MCF 10A (cell line): ENCODE measurements at regions of chr1 and their contacts with region 1.

Region 1: DNA sequence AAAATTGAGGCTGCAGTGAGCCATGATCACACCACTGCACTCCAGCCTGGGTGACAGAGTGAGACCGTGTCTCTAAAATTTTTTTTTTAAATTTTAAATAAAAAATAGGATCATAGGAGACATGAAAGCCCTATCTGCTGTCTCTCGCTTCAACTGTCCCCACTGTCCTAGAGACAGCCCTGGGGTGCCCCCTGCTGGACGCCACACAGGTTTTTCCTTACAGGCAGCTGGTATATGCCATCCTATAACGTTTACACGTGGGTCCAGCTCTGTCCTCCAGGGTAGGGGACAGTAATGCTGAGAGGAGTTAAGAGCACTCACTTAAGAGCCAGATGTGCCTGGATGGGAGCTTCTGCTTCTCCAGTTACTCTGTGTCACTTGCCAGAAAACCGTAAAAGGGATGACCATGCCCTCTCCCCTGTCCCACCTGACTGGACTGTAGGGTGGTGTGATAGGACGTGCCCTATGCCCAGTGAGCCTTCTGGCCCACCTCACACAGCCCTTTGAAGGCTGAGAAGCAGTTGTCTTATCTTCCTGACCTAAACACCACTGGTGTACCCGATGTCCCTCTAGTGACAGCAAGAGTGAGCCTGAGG is 8.5 kb downstream of the FBXO2 start:
- DNase-seq: peak; percentile 84
- H3K4me3 Mint-ChIP-seq: no peak overlapping the region
- H3K27ac Mint-ChIP-seq: no peak overlapping the region
- H3K4me1 Mint-ChIP-seq: no peaks in the 10 kb centered on the region
- H3K27me3 Mint-ChIP-seq: no peaks in the 10 kb centered on the region
- CTCF ChIP-seq: peak; percentile 88

Region 2: DNA sequence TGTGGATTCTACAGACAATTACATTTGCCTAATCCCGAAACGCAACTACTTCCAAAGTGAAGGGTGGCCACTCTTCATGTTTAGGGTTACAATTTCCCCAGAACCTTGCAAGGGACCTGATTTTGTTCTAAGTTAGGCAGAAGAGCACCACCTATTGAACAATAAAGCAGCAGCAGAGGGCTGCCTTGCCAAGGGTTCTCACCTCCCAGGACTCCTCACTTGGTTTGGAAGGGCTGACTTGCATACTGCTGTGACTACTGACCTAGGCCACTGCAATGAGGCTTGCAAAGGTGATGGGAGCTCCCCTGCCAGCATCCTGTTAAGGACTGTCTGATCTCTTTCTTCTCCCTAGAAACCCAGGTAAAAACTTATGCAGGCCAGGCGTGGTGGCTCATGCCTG is 397.6 kb before region 1 on chr1:
- CTCF ChIA-PET with region 1: interaction called, 123 read pairs
- POLR2A ChIA-PET with region 1: no interaction called
- intact Hi-C with region 1: no loop called
- DNase-seq: no peak
- H3K4me3 Mint-ChIP-seq: no peak overlapping the region
- H3K27ac Mint-ChIP-seq: no peak overlapping the region
- H3K4me1 Mint-ChIP-seq: no peaks in the 10 kb centered on the region
- H3K27me3 Mint-ChIP-seq: no peaks in the 10 kb centered on the region
- CTCF ChIP-seq: no peak

Region 3: GRCh38 chr1:11285883-11286734 is 359.7 kb before region 1 on chr1:
- CTCF ChIA-PET with region 1: interaction called, 10 read pairs
- POLR2A ChIA-PET with region 1: no interaction called
- intact Hi-C with region 1: loop called (anchors 2 kb)
- DNase-seq: no peak
- H3K4me3 Mint-ChIP-seq: no peak overlapping the region
- H3K27ac Mint-ChIP-seq: no peak overlapping the region
- H3K4me1 Mint-ChIP-seq: peaks cover 12% of the 10 kb centered on the region
- H3K27me3 Mint-ChIP-seq: no peaks in the 10 kb centered on the region
- CTCF ChIP-seq: peak; percentile 17

Region 4: DNA sequence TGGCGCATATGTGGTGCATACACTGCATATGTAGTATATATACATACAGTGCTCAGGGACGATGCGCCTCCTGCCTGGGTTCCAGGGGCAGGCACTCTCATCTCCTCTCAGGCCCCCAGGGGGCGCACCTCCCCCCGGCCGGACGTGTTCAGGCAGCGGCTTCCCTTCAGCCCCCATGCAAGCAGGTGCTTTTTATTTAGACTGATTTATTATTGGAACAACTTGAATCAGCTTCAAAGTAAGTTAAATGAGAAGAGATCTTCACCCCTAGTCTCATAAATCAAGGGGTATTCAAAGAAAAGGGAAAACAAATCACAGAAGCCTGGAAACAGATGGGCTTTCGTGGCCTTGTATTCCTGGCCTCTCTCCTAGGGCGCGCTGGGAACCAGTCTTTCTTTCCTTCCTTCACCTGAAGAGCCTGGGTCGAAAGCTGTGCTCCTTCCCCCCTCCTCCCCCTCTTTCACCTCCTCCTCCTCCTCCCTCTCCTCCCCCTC is 308.1 kb before region 1 on chr1:
- CTCF ChIA-PET with region 1: no interaction called
- POLR2A ChIA-PET with region 1: no interaction called
- intact Hi-C with region 1: loop called (anchors 1 kb)
- DNase-seq: peak; percentile 50
- H3K4me3 Mint-ChIP-seq: no peak overlapping the region
- H3K27ac Mint-ChIP-seq: no peak overlapping the region
- H3K4me1 Mint-ChIP-seq: no peaks in the 10 kb centered on the region
- H3K27me3 Mint-ChIP-seq: peaks cover 14% of the 10 kb centered on the region
- CTCF ChIP-seq: peak; percentile 62

Region 5: DNA sequence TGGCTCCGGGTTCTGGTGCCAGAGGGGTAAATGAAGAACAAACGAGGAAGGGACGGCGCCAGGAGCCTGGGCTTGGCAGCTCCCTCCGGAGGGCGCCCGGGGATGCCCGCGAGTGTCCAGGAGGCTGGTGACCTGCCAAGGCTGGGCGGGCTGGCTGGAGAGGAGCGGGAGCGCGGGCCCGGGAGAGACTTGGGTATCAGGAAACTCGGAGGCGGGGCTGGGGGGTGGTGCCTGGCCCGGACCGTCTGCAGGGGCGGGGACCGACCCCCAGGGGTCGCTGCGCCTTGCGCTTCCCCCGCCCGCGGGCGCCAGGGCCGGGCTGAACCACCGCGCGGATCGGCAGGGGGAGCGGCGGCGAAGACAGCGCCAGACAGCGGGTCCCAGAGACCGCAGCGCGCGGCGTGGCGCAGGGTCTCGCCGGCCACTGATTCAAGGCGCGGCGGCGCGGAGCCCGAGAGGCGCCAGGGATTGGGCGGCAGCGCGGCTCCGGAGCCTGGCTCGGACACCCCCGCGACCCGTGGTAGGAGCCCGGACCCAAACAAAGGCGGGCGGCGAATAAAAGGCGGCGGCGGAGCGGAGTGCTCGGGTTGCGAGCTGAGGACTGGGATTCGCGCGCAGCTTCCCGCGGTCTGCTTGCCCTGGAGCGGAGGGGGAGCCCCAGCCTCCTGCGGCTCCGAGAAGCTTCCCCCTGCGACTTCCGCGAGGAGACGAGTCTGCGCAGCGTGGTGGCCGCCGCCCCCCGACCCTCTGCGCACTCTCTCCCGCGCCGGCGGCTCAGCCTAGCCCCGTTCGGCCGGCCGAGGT is 167.0 kb before region 1 on chr1 and contains the start of gene DISP3:
- CTCF ChIA-PET with region 1: interaction called, 3 read pairs
- POLR2A ChIA-PET with region 1: no interaction called
- intact Hi-C with region 1: loop called (anchors 1 kb)
- DNase-seq: peak; percentile 50
- H3K4me3 Mint-ChIP-seq: peak within 1 kb of the TSS; percentile 64
- H3K27ac Mint-ChIP-seq: no peak within 1 kb of the TSS
- H3K4me1 Mint-ChIP-seq: no peaks in the 10 kb centered on the region
- H3K27me3 Mint-ChIP-seq: peaks cover 45% of the 10 kb centered on the region
- CTCF ChIP-seq: peak; percentile 70
- total RNA-seq, gene DISP3: 0.09 and 0.17 TPM in 2 replicates

Region 6: DNA sequence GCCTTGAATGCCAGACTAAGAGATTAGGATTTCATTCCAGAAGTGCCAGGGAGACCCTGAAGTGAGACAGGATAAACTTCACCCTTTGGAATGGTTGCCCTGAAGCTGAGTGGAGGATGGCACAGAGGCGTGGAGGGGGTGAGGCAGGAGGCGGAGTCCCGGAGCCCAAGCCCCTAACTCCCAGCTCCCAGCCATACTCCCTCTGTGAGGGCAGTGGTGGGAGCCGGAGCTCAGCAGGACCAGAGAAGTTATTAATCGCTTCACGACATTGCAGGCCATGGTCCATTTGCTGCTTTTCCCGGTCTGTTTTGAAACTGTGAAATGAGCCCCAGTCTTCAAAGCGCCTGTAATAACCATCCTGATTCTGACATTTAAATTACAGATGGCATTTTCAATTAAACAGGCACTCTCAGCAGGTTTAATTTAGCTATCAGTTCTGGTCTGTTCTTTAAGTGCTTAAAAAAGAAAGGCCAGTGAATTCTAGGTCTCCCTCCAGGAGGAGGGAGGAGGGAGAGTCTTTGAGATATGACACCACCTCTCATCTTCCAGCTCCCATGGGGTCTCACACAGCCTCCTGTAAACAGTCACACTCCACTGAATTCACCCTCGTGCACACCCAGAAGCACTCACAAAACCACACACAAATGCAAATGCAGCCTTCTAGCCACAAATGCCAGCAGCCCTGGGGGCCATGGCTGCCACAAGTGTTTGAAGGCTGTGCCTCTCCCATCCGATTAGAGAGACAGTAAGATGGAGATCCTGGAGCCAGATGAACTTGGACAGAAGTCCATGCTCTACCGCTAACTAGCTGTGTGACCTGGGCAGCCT is 11.2 kb before region 1 on chr1:
- CTCF ChIA-PET with region 1: interaction called, 13 read pairs
- POLR2A ChIA-PET with region 1: interaction called, 4 read pairs
- intact Hi-C with region 1: no loop called
- DNase-seq: no peak
- H3K4me3 Mint-ChIP-seq: no peak overlapping the region
- H3K27ac Mint-ChIP-seq: no peak overlapping the region
- H3K4me1 Mint-ChIP-seq: no peaks in the 10 kb centered on the region
- H3K27me3 Mint-ChIP-seq: peaks cover 27% of the 10 kb centered on the region
- CTCF ChIP-seq: no peak

Region 7: DNA sequence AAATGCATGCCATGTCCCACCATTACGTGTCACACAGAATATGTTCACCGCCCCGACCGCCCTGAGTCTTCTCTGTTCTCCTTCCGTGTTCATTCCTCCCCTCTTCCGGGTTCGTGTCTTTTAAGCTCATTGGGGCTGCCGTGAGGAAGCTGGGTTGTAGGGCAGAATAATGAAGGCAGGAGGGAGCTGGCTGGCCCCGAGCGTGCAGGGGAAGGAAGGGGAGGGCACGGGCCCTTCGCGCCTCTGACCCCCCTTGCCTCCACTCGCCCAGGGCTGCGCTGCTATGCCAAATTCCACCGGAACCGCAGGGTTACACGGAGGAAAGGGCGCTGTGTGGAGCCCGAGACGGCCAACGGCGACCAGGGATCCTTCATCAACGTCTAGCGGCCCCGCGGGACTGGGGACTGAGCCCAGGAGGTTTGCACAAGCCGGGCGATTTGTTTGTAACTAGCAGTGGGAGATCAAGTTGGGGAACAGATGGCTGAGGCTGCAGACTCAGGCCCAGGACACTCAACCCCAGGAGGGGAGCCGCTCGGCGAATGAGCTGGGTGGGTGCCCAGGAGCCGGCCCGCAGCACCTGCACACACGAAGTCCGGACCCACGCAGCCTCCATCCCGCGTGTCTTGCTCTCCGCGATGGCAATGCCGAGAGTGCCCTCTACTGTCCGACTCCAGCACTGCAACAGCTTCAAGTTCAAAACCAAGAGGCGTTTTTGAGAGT is 73.7 kb after region 1 on chr1:
- CTCF ChIA-PET with region 1: interaction called, 19 read pairs
- POLR2A ChIA-PET with region 1: no interaction called
- intact Hi-C with region 1: no loop called
- DNase-seq: peak; percentile 47
- H3K4me3 Mint-ChIP-seq: peak overlapping the region; percentile 53
- H3K27ac Mint-ChIP-seq: no peak overlapping the region
- H3K4me1 Mint-ChIP-seq: peaks cover 5% of the 10 kb centered on the region
- H3K27me3 Mint-ChIP-seq: no peaks in the 10 kb centered on the region
- CTCF ChIP-seq: peak; percentile 89